Posterior vena cava (tissue), 2 donors: ENCODE measurements at regions of chr18 and their contacts with region 1.

Region 1: DNA sequence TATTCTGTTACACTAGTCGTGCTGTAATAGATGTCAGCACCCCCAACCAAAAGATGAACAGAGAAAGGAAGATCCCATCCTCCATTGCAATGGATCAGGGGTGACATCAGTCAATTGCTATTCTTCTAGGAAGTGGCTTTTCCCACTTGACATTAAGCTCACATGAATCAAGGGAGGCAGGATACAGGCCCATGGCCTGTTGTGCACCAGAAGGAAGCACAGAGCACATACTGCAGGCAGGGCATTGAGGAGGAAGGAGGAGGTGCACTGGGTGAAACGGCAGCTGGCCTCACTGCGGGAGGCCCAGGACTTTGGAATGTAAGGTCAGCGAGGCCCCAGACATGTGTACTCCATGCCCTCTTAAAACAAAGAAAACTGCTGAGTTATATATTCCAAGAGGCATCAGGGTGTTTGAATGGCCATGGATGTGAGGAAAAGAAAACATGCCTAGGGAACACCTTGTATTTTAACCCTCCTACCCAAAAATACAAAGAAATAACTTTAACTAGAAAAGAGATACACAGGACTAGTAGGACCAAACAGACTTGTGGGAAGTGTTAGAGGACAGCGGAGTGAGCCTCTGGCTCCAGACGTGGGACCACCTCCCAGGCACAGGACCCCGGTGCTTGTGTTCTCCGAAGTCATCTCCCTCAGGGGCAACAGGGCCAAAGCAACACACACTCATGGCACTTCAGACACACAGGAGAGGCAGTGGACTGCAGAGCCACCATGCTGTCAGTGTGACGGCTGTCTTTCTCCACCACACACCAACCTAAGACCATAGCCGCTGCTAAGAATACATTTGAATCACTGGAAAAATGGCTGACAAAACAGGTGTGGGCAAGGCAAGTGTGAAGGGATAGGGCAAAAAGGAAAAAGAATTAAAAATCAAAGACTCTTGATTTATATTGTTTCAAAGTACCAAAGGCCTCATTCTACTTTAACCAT is 51.4 kb upstream of the RIOK3 start:
- DNase-seq: no peak

Region 2: GRCh38 chr18:23386317-23386716 is 15.4 kb before region 1 on chr18:
- intact Hi-C with region 1: loop called in 1 of 2 experiments (anchors 1 kb)
- DNase-seq: no peak